Activated naive CD4-positive, alpha-beta T cell treated with anti-CD3 and anti-CD28 coated beads, Interleukin-2, amount 10 ng/mL, durations not matched to agents 7 days and 5 days (primary cell): ENCODE measurements at regions of chr17 and their contacts with region 1.

Region 1: GRCh38 chr17:77542551-77543490 is 402.1 kb downstream of the SEC14L1 start:
- DNase-seq: peak; percentile 79
- H3K4me3 Mint-ChIP-seq: no peak overlapping the region
- H3K27ac Mint-ChIP-seq: no peak overlapping the region
- H3K4me1 Mint-ChIP-seq: peaks cover 2% of the 10 kb centered on the region
- H3K27me3 Mint-ChIP-seq: peaks cover 56% of the 10 kb centered on the region

Region 2: DNA sequence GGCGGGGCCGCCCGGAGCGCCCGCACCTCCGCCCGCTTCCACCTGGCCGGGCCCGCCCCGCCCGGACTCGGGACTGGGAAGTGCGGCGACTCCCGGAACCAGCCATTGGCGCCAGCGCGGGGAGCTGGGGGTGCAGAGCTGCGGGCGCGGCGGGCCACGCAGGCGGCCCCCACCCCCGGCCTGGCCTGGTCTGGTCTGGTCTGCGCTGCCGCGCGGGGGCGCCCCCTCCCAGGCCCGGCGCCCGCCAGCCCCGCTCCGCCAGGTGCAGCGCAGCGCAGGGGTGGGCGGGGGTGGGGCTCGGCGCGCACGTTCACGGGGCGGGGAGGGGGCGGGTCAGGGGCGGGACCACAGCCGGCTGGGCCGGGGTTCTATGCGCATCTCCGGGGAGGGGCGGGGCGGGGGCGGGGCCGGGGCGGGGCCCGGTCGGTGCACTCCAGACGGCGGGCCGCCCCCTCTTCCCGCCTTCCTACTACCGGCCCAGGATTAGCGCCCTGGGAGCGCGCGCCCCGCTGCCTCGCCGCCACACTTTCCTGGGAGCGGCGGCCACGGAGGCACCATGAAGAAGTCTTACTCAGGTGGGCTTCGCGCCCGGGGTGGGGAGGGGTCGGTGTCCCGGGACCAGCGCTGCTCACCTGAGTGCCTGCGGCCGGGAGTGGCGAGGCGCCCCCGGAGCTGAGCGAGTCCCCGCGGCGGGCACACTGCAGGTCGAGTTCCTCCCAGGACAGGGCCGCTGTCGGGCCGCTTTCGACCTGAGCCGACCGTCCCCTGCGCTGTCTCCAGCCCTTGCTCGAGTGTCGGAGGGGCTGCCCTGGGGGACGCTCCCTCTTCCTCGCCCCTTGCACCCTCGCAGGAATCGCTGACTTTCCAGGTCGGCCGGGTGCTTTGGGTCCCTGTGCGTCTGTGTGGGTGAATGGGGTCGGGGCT is 261.6 kb before region 1 on chr17:
- CTCF ChIA-PET with region 1: no interaction called
- DNase-seq: peak; percentile 77
- H3K4me3 Mint-ChIP-seq: peak overlapping the region; percentile 69
- H3K27ac Mint-ChIP-seq: peak overlapping the region; percentile 74
- H3K4me1 Mint-ChIP-seq: peaks cover 15% of the 10 kb centered on the region
- H3K27me3 Mint-ChIP-seq: peaks cover 81% of the 10 kb centered on the region

Region 3: GRCh38 chr17:77405867-77406732 is 136.7 kb before region 1 on chr17:
- CTCF ChIA-PET with region 1: no interaction called
- DNase-seq: no peak
- H3K4me3 Mint-ChIP-seq: peak overlapping the region; percentile 85
- H3K27ac Mint-ChIP-seq: peak overlapping the region; percentile 96
- H3K4me1 Mint-ChIP-seq: peaks cover 99% of the 10 kb centered on the region
- H3K27me3 Mint-ChIP-seq: no peaks in the 10 kb centered on the region

Region 4: DNA sequence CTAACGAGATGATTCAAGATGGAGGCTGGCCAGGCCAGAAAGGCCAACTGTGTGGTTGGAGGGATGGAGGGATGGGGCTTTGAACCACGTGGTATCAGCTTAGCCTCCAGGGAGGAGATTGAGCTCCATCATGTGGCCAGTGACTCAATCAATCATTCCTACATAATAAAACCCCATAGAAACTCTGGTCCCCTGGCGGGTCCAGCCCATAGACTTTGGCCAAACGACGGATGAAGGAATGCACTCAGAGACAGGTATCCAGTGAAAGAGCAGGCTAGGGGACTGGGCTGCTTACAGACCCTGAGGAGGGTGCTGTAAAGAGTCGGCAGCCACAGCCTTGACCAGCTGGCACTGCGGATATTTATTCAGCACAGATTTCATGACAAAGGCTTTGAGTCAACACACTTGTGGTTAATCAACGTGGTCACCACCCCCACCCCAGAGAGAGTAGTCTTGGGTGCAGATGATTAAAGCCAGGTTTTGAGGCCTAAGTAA is 106.9 kb after region 1 on chr17:
- CTCF ChIA-PET with region 1: interaction called, 15 read pairs
- DNase-seq: no peak
- H3K4me3 Mint-ChIP-seq: no peak overlapping the region
- H3K27ac Mint-ChIP-seq: no peak overlapping the region
- H3K4me1 Mint-ChIP-seq: peaks cover 34% of the 10 kb centered on the region
- H3K27me3 Mint-ChIP-seq: peaks cover 13% of the 10 kb centered on the region

Region 5: DNA sequence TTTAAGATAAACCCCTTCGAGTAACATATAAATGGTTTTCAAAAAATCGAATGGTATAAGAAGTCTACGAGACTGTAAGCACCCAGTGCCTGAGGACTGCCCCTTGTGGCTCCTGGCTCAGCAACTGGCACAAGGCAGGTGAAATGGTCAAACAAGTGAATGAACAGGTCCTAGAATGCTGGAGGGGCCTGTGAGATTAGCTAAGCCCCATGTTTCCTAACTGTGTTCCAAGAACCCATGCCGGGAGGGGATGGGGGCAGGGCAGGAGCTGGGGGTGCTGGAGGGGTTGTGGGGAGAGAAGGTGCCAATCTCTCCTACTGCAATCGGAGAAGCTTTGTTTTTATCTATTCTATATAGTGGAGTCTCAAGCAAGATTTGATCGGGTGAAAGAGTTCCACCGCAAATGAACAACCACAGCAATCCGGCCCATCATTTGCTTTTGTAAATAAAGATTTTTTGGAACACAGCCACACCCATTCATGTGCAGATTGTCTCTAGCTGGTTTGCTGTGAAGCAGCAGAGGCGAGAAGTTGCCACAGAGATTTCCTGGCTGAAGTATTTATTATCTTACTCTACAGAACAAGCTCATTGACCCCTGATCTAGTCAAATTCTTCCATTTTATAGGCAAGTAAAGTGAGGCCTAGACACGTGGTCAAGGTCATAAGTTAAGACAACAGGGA is 220.1 kb after region 1 on chr17:
- CTCF ChIA-PET with region 1: interaction called, 11 read pairs
- DNase-seq: no peak
- H3K4me3 Mint-ChIP-seq: no peak overlapping the region
- H3K27ac Mint-ChIP-seq: no peak overlapping the region
- H3K4me1 Mint-ChIP-seq: no peaks in the 10 kb centered on the region
- H3K27me3 Mint-ChIP-seq: peaks cover 39% of the 10 kb centered on the region

Region 6: GRCh38 chr17:78013683-78014467 is 471.1 kb after region 1 on chr17:
- CTCF ChIA-PET with region 1: interaction called, 53 read pairs
- DNase-seq: peak; percentile 68
- H3K4me3 Mint-ChIP-seq: no peak overlapping the region
- H3K27ac Mint-ChIP-seq: no peak overlapping the region
- H3K4me1 Mint-ChIP-seq: peaks cover 17% of the 10 kb centered on the region
- H3K27me3 Mint-ChIP-seq: no peaks in the 10 kb centered on the region